Naive thymus-derived CD4-positive, alpha-beta T cell (primary cell): ENCODE measurements at regions of chr4 and their contacts with region 1.

Region 1: DNA sequence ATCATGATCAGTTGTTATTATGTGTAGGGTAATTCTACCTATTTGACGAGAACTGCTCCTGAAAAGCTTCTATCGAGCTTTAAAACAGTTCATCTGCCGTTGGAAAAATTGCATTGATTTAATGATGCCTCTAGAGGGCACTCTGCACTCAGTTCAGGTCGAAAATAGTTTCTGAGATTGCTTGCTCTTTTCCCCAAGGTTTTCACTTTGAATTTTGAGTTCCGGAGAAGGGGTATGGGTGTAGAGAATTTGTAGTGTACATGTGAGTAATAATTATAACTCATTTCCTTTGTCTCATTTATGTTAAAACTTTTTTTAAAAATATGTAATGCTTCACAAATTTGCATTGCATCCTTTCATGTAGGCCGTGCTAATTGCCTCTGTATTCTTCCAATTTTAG is 28.4 kb upstream of the TNIP3 start:
- DNase-seq: peak in 5 of 9 donors; percentile 31 to 56 (median 50)
- ATAC-seq: peak; percentile 51
- H3K4me3 ChIP-seq: no peak overlapping the region
- H3K4me3 Mint-ChIP-seq: peak overlapping the region; percentile 22 to 88 (median 79)
- H3K27ac ChIP-seq: peak overlapping the region; percentile 18
- H3K27ac Mint-ChIP-seq: peak overlapping the region; percentile 62 to 92 (median 81)
- H3K4me1 ChIP-seq: peaks cover 32 to 50% of the 10 kb centered on the region in 2 donors
- H3K4me1 Mint-ChIP-seq: peaks cover 22 to 57% (median 52%) of the 10 kb centered on the region in 7 donors
- H3K27me3 ChIP-seq: no peaks in the 10 kb centered on the region
- H3K27me3 Mint-ChIP-seq: no peaks in the 10 kb centered on the region

Region 2: GRCh38 chr4:120922381-120923206 is 269.9 kb before region 1 on chr4 and contains the start of gene PRDM5:
- CTCF ChIA-PET with region 1: no interaction called
- POLR2A ChIA-PET with region 1: no interaction called
- intact Hi-C with region 1: loop called in 1 of 2 experiments (anchors 2 kb)
- DNase-seq: peak; percentile 6 to 37 (median 22)
- ATAC-seq: peak; percentile 67
- H3K4me3 ChIP-seq: peak within 1 kb of the TSS; percentile 72
- H3K4me3 Mint-ChIP-seq: peak within 1 kb of the TSS; percentile 82 to 98 (median 96)
- H3K27ac ChIP-seq: peak within 1 kb of the TSS; percentile 18
- H3K27ac Mint-ChIP-seq: peak within 1 kb of the TSS in 8 of 9 donors; percentile 75 to 93 (median 82)
- H3K4me1 ChIP-seq: peaks cover 0 to 5% of the 10 kb centered on the region in 2 donors
- H3K4me1 Mint-ChIP-seq: peaks cover 8 to 16% (median 13%) of the 10 kb centered on the region in 7 donors
- H3K27me3 ChIP-seq: no peaks in the 10 kb centered on the region
- H3K27me3 Mint-ChIP-seq: peaks cover 0 to 69% (median 0%) of the 10 kb centered on the region in 5 donors
- total RNA-seq, gene PRDM5: 0.29 to 1.1 (median 0.72) TPM in 4 of 5 experiments, not detected in the other

Region 3: DNA sequence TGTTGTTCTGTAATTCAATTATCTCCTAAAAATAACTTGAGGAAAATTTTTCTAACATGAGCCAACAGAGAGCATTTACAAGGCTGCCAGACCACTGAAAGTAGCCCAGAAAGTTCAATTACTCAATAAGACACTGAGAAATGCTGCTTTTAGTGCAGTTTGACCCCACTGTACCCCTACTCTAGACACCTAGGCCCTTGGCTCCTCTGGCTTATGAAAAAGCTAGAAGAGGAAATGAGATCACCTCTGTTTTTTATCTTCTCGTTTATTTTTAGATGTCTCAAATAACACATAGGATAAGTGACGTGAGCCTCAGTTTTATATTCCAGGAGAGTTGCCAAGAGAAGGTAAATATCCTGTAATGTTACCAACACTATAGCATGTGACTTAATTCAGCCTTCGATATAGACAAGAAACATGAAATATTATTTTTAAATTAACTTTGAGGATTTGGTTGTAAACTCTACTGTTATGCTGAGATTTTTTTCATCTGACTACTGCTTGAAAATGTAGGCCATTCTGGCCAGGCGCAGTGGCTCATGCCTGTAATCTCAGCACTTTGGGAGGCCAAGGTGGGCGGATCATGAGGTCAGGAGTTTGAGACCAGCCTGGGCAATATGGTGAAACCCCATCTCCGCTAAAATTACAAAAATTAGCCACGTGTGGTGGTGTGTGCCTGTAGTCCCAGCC is 52.8 kb before region 1 on chr4:
- CTCF ChIA-PET with region 1: interaction called, 4 read pairs
- POLR2A ChIA-PET with region 1: interaction called, 3 read pairs
- intact Hi-C with region 1: loop called in 1 of 2 experiments (anchors 1 kb)
- DNase-seq: peak in 7 of 9 donors; percentile 40 to 77 (median 70)
- ATAC-seq: peak; percentile 85
- H3K4me3 ChIP-seq: no peak overlapping the region
- H3K4me3 Mint-ChIP-seq: peak overlapping the region; percentile 10 to 75 (median 44)
- H3K27ac ChIP-seq: peak overlapping the region; percentile 62
- H3K27ac Mint-ChIP-seq: peak overlapping the region; percentile 74 to 97 (median 91)
- H3K4me1 ChIP-seq: peaks cover 0 to 29% of the 10 kb centered on the region in 2 donors
- H3K4me1 Mint-ChIP-seq: peaks cover 22 to 65% (median 54%) of the 10 kb centered on the region in 7 donors
- H3K27me3 ChIP-seq: no peaks in the 10 kb centered on the region
- H3K27me3 Mint-ChIP-seq: no peaks in the 10 kb centered on the region

Region 4: DNA sequence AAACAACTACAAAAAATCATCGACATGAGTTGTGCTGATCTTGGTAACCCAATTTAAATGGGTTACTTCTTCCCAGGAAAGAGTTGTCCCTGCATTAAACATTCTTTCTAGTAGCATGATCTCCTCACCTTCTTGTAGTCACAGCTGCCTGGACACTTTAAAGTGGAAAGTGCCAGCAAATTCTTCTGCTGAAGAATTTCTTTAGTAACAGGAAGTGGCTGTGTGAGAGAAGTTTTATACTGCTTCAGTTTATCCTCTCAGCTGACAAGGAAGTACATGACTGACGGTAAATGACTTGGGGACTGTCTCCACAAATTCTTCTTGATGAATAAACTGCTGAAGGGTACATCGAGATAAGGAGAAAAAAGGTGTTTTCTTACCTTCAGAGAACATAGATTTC is 10.2 kb before region 1 on chr4:
- CTCF ChIA-PET with region 1: interaction called, 15 read pairs
- POLR2A ChIA-PET with region 1: interaction called, 10 read pairs
- intact Hi-C with region 1: loop called (anchors 1 kb)
- DNase-seq: peak in 7 of 9 donors; percentile 59 to 79 (median 67)
- ATAC-seq: peak; percentile 84
- H3K4me3 ChIP-seq: peak overlapping the region; percentile 54
- H3K4me3 Mint-ChIP-seq: peak overlapping the region; percentile 62 to 89 (median 84)
- H3K27ac ChIP-seq: peak overlapping the region; percentile 94
- H3K27ac Mint-ChIP-seq: peak overlapping the region; percentile 92 to 97 (median 95)
- H3K4me1 ChIP-seq: peaks cover 43 to 52% of the 10 kb centered on the region in 2 donors
- H3K4me1 Mint-ChIP-seq: peaks cover 52 to 93% (median 80%) of the 10 kb centered on the region in 7 donors
- H3K27me3 ChIP-seq: no peaks in the 10 kb centered on the region
- H3K27me3 Mint-ChIP-seq: no peaks in the 10 kb centered on the region

Region 5: DNA sequence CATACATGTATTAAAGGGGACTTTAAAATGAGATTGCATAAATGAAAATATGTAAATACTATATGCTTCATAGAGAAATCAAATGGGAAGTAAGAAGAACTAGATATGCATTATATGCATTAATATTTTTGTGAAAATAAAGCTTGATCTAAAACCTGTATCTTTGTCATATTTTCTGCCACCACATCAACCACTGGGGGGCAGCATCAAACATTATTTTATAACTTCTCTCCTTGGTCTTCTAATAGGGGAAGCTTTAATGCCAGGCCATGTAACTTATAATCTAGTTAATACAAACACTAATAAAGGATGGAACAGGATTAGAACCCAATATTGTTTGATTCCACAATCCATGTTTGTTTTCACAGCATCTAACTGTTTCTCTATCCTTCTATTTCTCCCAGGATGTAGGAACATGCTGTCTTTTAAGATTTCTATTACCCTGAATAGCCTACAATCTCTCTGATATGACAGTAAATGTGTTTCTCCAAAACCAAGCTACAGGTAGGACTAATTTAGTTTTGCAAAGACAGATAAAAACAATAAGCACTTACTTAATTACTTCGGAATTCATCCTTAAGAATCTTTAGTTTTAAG is 178.3 kb after region 1 on chr4:
- CTCF ChIA-PET with region 1: no interaction called
- POLR2A ChIA-PET with region 1: no interaction called
- intact Hi-C with region 1: loop called (anchors 2 to 5 kb)
- DNase-seq: peak in 4 of 9 donors; percentile 5 to 23 (median 10)
- ATAC-seq: no peak
- H3K4me3 ChIP-seq: no peak overlapping the region
- H3K4me3 Mint-ChIP-seq: no peak overlapping the region
- H3K27ac ChIP-seq: no peak overlapping the region
- H3K27ac Mint-ChIP-seq: no peak overlapping the region
- H3K4me1 ChIP-seq: no peaks in the 10 kb centered on the region
- H3K4me1 Mint-ChIP-seq: no peaks in the 10 kb centered on the region
- H3K27me3 ChIP-seq: peaks cover 0 to 3% of the 10 kb centered on the region in 2 donors
- H3K27me3 Mint-ChIP-seq: peaks cover 9 to 30% (median 17%) of the 10 kb centered on the region in 5 donors